PC-3 (cell line): ENCODE measurements at regions of chr1 and their contacts with region 1.

Region 1: DNA sequence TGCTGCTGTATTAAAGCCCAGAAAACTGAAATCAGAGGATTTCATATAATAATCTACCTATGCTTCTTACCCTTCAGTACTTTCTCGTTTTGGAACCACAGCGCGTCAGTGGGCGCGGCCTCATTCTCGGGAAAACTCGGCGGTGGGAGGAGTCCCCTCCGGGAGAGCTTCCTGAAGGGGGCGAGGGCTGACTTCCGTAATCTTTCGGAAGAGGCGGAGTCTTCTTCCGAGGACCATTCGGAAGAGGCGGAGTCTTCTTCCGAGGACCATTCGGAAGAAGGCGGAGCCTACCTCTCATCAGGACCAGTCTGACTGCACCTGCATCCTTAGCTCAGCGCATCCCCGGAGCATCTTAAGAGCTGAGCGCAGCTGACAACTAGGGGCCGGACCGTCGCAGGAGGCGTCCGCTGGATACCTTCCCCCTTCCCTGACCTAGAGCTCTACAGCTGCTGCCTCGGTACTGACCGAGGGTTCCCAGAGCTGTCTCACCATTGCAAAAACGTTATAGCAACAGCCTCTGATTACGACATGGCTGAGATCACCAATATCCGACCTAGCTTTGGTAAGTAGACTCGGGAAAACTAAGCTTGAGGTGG is at the start of gene SYT11:
- DNase-seq: peak; percentile 99
- ATAC-seq: peak; percentile 88
- H3K4me3 ChIP-seq: peak within 1 kb of the TSS; percentile 66
- H3K27ac ChIP-seq: no peak within 1 kb of the TSS
- H3K4me1 ChIP-seq: peaks cover 13% of the 10 kb centered on the region
- H3K27me3 ChIP-seq: peaks cover 27% of the 10 kb centered on the region
- CTCF ChIP-seq: no peak
- total RNA-seq, gene SYT11: 0.29 and 0.44 TPM in 2 replicates

Region 2: DNA sequence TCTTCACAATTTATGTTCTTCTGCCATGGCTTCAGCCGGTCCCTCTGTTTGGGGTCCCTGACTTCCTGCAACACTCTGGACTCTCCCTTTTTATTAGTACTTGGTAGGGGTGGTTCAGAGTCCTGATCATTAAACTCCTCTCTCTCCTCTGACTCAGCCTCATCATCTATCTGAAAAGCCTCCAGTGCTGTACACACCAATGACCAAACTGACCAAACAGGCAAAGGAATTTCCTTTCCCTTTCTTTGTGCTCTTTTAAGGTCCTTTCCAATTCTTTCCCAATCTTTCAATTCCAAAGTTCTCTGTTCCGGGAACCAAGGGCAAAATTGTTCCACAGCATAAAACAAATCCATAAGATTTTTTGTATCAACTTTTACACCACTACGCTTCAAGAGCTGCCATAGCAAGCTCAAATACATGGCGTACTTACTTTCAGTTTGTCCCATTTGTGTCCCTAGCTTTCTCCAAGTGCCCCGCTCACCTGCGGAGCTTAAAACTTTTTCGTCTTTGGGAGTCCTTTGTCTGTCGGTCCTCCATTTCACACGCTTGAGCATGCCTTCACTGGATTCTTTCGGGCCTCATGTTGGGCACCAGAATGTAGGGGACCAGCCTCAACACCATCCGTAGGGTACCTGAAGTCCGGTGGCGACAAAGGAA is 160.8 kb before region 1 on chr1:
- CTCF ChIA-PET with region 1: no interaction called
- POLR2A ChIA-PET with region 1: no interaction called
- intact Hi-C with region 1: loop called (anchors 1 kb)
- DNase-seq: peak; percentile 40
- ATAC-seq: peak; percentile 89
- H3K4me3 ChIP-seq: no peak overlapping the region
- H3K27ac ChIP-seq: no peak overlapping the region
- H3K4me1 ChIP-seq: peaks cover 10% of the 10 kb centered on the region; the same call in 1 of the 2 replicates
- H3K27me3 ChIP-seq: no peaks in the 10 kb centered on the region
- CTCF ChIP-seq: no peak

Region 3: DNA sequence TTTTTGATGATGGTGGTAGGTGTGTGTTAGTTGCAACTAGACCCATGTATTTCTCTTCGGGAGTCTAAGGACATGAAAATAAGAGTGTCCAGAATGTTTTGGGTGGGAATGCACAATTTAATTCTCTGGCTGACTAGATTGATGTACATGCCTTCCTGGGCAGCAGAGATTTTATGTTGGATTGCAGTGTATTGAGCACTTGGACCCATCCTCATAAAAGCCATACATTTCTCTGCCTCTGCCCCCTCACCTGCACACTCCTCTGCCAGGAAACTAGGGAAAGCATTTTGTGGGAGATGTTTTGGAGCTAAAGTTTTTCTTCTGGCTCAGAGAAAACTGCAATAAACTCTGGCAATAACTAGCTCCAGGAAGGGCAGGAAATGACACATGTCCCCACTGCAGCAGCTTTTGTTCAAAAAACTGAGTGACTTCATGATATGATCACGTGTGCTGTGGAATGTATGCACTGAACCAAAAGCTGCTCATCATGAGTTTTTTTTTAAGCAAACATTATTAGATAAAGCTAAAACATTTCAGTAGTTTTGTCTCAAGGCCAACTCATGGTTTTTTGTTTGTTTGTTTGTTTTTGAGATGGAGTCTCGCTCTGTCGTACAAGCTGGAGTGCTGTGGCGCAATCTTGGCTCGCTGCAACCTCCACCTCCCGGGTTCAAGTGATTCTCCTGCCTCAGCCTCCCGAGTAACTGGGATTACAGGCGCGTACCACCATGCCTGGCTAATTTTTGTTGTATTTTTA is 34.2 kb after region 1 on chr1:
- CTCF ChIA-PET with region 1: no interaction called
- POLR2A ChIA-PET with region 1: interaction called, 10 read pairs
- intact Hi-C with region 1: loop called (anchors 1 kb)
- DNase-seq: peak; percentile 97
- ATAC-seq: peak; percentile 86
- H3K4me3 ChIP-seq: peak overlapping the region; percentile 46
- H3K27ac ChIP-seq: peak overlapping the region; percentile 91
- H3K4me1 ChIP-seq: peaks cover 30% of the 10 kb centered on the region
- H3K27me3 ChIP-seq: no peaks in the 10 kb centered on the region
- CTCF ChIP-seq: no peak

Region 4: DNA sequence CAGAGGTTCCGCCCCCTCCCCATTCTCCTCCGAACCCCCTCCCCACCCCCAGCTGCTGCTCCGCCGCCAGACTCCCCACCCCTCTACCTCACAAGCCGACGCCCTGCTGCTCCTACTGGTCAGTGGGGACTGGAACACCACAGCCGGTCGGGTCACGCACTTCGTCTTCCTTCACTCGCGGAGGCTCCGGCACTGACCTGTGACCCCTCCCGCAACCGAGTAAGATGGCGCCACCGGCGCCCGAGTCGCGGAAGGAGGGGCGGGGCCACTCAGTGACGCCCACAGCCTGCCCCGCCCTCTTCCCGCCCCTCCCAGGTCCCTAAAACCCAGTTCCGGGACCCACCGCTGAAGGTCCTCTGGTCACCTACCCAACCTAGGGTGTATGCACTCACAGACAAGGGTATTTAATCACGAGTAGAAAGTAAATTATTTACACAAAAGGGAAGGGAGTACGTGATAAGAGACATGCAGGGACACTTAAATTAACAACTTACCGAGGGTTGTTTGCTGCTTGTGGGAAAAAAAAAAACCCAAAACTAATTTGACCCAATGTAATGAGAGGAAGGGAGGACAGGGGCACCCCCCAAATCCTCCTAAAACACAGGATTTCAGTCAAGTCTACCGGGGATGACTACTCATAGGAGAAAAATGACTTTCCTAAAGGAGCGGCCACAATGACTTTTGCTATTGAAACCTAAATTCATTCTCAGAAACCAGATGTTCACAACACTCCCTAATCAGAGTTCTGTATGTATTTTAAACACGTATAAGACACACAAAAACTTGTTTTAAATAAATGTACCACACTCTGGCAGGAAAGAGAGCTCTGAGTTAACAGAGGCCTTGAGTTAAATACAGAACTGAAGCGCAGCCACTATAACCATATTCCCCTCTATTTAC is 52.1 kb after region 1 on chr1 and contains the start of gene RIT1:
- CTCF ChIA-PET with region 1: no interaction called
- POLR2A ChIA-PET with region 1: no interaction called
- intact Hi-C with region 1: loop called (anchors 5 kb)
- DNase-seq: peak; percentile 85
- ATAC-seq: peak; percentile 76
- H3K4me3 ChIP-seq: peak within 1 kb of the TSS; percentile 83
- H3K27ac ChIP-seq: peak within 1 kb of the TSS; percentile 76
- H3K4me1 ChIP-seq: peaks cover 32% of the 10 kb centered on the region
- H3K27me3 ChIP-seq: no peaks in the 10 kb centered on the region
- CTCF ChIP-seq: no peak
- total RNA-seq, gene RIT1: 14.7 and 18.8 TPM in 2 replicates